ENCODE measurements at regions of chr2 and their contacts with region 1.

Region 1: GRCh38 chr2:169528271-169528701 is 18.8 kb downstream of the KLHL41 start:
- DNase-seq: peak in 2 of 3 donors; percentile 53 to 58
- ATAC-seq: peak; percentile 86 to 93 (median 91)
- H3K4me3 ChIP-seq: no peak overlapping the region
- H3K27ac ChIP-seq: no peak overlapping the region
- H3K4me1 ChIP-seq: no peaks in the 10 kb centered on the region
- H3K27me3 ChIP-seq: no peaks in the 10 kb centered on the region
- CTCF ChIP-seq: peak; percentile 82 to 91 (median 90)
- POLR2A ChIP-seq: no peak

Region 2: GRCh38 chr2:169464882-169465281 is 63.4 kb before region 1 on chr2:
- intact Hi-C with region 1: no loop called
- DNase-seq: no peak
- ATAC-seq: no peak
- H3K4me3 ChIP-seq: no peak overlapping the region
- H3K27ac ChIP-seq: no peak overlapping the region
- H3K4me1 ChIP-seq: no peaks in the 10 kb centered on the region
- H3K27me3 ChIP-seq: no peaks in the 10 kb centered on the region
- CTCF ChIP-seq: no peak
- POLR2A ChIP-seq: no peak

Region 3: DNA sequence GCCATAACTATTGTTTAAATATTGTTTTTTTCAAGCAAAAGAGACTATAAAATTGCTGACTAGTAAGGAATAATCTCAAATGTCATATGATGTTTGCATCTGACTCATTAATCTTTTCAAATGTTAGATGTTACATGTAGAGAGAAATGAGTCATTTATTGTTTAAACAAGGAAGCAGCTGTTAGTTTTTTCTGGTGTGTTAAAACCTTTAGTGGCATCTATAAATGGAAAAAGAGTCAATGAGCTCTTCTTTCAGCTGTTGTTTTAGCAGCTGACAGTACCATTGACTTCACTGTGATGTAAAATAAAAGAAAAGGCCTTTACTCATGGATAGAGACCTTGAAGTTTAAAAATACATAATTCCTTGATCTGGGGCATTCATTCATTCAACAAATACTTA is 20.6 kb before region 1 on chr2:
- intact Hi-C with region 1: no loop called
- DNase-seq: no peak
- ATAC-seq: peak in 1 of 4 donors; percentile 89
- H3K4me3 ChIP-seq: no peak overlapping the region
- H3K27ac ChIP-seq: no peak overlapping the region
- H3K4me1 ChIP-seq: no peaks in the 10 kb centered on the region
- H3K27me3 ChIP-seq: no peaks in the 10 kb centered on the region
- CTCF ChIP-seq: no peak
- POLR2A ChIP-seq: no peak

Region 4: DNA sequence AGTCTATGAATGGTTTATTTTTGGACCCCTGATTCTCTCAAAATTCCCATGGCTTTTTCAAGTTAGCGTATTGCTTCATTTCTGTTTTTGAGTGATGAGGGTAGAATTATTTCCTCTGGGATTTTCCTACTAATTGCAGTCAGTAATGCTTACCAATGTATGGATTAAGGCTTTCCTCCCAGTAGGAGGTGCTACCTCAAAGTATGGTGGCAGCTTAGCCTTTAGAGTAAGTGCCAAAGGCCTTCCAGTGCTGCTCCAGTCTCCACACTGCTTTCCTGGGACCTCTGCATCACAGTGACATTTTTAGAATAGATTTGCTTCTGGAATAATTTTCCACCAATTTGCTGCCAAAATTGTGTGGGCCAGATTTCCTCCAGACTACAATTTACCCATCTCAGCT is 254.2 kb after region 1 on chr2:
- intact Hi-C with region 1: loop called in 1 of 2 experiments (anchors 10 kb)
- DNase-seq: no peak
- ATAC-seq: no peak
- H3K4me3 ChIP-seq: no peak overlapping the region
- H3K27ac ChIP-seq: no peak overlapping the region
- H3K4me1 ChIP-seq: no peaks in the 10 kb centered on the region
- H3K27me3 ChIP-seq: no peaks in the 10 kb centered on the region
- CTCF ChIP-seq: no peak
- POLR2A ChIP-seq: no peak